B cell (primary cell): ENCODE measurements at regions of chr2 and their contacts with region 1.

Region 1: DNA sequence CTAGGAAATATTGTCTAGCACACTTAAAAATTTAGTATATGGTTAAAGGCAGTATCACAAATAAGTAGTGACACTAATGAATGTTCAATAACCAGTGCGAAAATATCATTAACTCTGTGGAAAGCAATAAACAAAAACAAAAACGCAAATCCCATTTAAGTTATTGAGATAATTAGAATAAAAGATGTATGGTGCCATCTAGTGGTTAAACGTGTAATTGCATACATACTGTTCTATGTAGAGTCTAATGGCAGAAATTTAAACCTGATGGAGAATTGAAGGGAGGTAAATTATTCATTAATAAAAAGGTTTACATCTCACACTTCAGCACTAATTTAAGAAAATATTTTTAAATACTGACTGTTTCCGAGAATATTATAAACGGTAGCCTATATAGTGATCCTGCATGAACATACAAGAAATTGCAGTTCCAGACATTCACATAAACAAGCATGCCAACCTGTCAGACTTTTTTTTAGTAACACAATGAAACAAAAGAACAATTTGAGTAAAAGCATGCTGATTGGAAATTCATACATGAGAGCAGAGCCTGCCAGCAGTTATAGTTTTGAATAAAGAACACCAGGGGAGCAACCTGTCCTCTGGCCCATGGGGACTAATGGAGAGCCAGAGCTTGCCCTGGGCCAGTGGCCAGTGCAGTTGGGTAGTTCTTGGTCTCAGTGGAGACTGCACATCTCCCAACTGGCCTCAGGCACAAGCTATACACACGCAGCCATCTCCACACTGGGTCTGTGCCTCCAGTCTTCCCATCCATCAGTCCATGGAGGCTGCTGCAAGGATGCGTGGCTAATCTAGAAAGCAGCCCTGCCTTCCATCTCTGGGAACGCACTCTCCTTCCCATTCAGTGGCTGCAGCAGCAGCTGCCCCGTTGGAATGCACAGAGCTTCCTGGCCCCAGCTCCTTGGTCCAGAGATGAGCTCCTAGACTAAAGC is 28.0 kb downstream of the GCG start:
- DNase-seq: peak; percentile 70
- ATAC-seq: no peak
- H3K4me3 ChIP-seq: no peak overlapping the region
- H3K4me3 Mint-ChIP-seq: no peak overlapping the region
- H3K27ac ChIP-seq: no peak overlapping the region
- H3K27ac Mint-ChIP-seq: no peak overlapping the region
- H3K4me1 ChIP-seq: peaks cover 13 to 15% of the 10 kb centered on the region in 2 donors
- H3K4me1 Mint-ChIP-seq: peaks cover 21% of the 10 kb centered on the region
- H3K27me3 ChIP-seq: no peaks in the 10 kb centered on the region
- H3K27me3 Mint-ChIP-seq: no peaks in the 10 kb centered on the region
- CTCF ChIP-seq: peak; percentile 95

Region 2: DNA sequence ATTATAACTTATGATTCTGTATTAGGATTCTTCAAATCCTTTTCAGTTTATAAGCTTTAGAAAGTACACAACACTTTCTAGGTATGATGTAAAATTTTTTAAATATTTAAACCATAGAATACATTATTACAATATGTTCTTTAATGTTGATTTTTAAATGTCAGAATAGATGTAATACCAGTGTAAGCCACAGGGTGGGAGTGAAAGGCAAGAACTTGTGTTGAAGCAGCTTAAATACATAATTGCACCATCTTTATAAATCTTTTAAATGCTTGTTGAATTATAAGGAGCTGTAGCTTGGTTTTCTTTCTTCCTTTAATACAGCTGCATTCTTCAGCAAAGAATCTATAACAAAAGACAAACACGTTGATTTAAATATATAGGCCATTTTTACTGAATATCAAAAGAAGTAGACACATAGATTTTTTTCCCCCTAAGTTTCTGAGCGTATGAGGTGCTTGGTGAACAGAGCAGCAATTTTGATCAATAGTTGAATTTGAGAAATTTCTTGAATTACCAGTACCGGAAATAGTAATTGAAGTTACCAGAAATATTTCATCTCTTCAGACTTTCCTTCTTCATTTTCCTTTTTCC is 900.8 kb before region 1 on chr2:
- CTCF ChIA-PET with region 1: no interaction called
- POLR2A ChIA-PET with region 1: no interaction called
- intact Hi-C with region 1: loop called (anchors 5 kb)
- DNase-seq: peak; percentile 62
- ATAC-seq: peak; percentile 66
- H3K4me3 ChIP-seq: no peak overlapping the region
- H3K4me3 Mint-ChIP-seq: no peak overlapping the region
- H3K27ac ChIP-seq: no peak overlapping the region
- H3K27ac Mint-ChIP-seq: no peak overlapping the region
- H3K4me1 ChIP-seq: no peaks in the 10 kb centered on the region
- H3K4me1 Mint-ChIP-seq: no peaks in the 10 kb centered on the region
- H3K27me3 ChIP-seq: no peaks in the 10 kb centered on the region
- H3K27me3 Mint-ChIP-seq: no peaks in the 10 kb centered on the region
- CTCF ChIP-seq: peak; percentile 91

Region 3: DNA sequence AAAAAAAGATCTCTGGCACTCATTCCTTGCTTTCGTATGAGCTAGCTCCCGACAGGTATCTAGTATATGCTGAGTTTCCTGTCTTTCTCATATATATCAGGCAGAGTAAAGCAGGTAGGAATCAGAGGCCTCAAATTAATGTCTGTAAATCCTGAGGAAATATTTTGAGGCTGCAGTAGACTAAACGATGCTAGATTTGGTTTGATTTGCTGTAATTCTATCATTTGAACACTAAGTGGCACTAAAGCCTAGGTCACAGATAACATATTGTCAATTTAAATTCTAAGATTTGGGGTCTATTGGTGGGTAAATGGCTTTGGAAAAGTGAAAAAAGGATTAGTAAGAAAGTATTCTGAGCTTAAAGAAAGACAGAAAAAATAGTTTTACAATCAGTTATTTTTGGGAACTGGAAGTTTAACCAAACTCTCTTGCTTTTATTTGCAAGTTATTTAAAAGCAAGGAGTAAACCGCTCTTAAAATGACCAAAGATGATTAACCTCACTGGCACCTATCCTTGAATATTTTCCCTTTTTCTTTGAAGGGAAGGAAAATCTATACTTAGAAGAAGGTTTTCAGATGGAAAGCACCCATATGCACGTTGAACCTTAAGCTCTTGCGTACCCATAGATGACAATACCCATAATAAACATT is 537.4 kb before region 1 on chr2:
- CTCF ChIA-PET with region 1: no interaction called
- POLR2A ChIA-PET with region 1: no interaction called
- intact Hi-C with region 1: loop called (anchors 5 kb)
- DNase-seq: peak; percentile 8
- ATAC-seq: no peak
- H3K4me3 ChIP-seq: no peak overlapping the region
- H3K4me3 Mint-ChIP-seq: no peak overlapping the region
- H3K27ac ChIP-seq: no peak overlapping the region
- H3K27ac Mint-ChIP-seq: no peak overlapping the region
- H3K4me1 ChIP-seq: no peaks in the 10 kb centered on the region
- H3K4me1 Mint-ChIP-seq: no peaks in the 10 kb centered on the region
- H3K27me3 ChIP-seq: no peaks in the 10 kb centered on the region
- H3K27me3 Mint-ChIP-seq: no peaks in the 10 kb centered on the region
- CTCF ChIP-seq: peak; percentile 59

Region 4: GRCh38 chr2:162007447-162008040 is 116.5 kb before region 1 on chr2:
- CTCF ChIA-PET with region 1: interaction called, 12 read pairs
- POLR2A ChIA-PET with region 1: no interaction called
- intact Hi-C with region 1: no loop called
- DNase-seq: peak; percentile 20
- ATAC-seq: no peak
- H3K4me3 ChIP-seq: no peak overlapping the region
- H3K4me3 Mint-ChIP-seq: no peak overlapping the region
- H3K27ac ChIP-seq: no peak overlapping the region
- H3K27ac Mint-ChIP-seq: no peak overlapping the region
- H3K4me1 ChIP-seq: no peaks in the 10 kb centered on the region
- H3K4me1 Mint-ChIP-seq: no peaks in the 10 kb centered on the region
- H3K27me3 ChIP-seq: no peaks in the 10 kb centered on the region
- H3K27me3 Mint-ChIP-seq: no peaks in the 10 kb centered on the region
- CTCF ChIP-seq: peak; percentile 90

Region 5: DNA sequence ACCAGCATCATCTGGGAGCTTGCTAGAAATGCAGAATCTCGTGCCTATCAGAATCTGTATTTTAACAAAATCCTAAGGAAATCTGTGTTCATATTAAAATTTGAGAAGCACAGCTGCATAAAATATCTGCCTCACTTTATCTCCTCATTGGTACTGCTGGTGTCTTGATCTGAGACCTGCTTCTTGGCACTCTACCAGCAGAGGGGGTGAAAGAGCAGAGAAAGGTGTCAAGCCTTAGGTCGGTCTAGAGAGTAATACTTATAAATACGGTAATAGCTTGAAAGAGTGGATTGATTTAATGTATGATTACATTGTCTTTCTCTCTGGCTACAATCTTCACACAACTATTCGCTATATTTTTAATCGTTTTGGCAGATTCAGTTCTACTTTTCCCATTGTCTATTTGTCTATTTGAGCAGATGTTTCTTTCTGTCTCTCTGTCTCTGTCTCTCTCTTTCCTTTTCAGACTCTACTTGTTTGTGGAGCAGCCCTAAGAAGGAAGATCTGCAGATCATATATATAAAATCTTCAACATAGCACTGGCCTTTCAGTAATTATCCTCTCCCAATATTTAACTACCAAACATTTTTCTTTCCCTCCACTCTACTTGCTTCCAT is 29.6 kb after region 1 on chr2:
- CTCF ChIA-PET with region 1: interaction called, 20 read pairs
- POLR2A ChIA-PET with region 1: no interaction called
- intact Hi-C with region 1: no loop called
- DNase-seq: peak; percentile 56
- ATAC-seq: peak; percentile 60
- H3K4me3 ChIP-seq: no peak overlapping the region
- H3K4me3 Mint-ChIP-seq: no peak overlapping the region
- H3K27ac ChIP-seq: no peak overlapping the region
- H3K27ac Mint-ChIP-seq: no peak overlapping the region
- H3K4me1 ChIP-seq: no peaks in the 10 kb centered on the region
- H3K4me1 Mint-ChIP-seq: peaks cover 2% of the 10 kb centered on the region
- H3K27me3 ChIP-seq: peaks cover 0 to 7% (median 3%) of the 10 kb centered on the region in 4 experiments
- H3K27me3 Mint-ChIP-seq: peaks cover 29% of the 10 kb centered on the region
- CTCF ChIP-seq: peak; percentile 82

Region 6: GRCh38 chr2:162623888-162624287 is 499.8 kb after region 1 on chr2:
- CTCF ChIA-PET with region 1: no interaction called
- POLR2A ChIA-PET with region 1: no interaction called
- intact Hi-C with region 1: no loop called
- DNase-seq: no peak
- ATAC-seq: no peak
- H3K4me3 ChIP-seq: no peak overlapping the region
- H3K4me3 Mint-ChIP-seq: no peak overlapping the region
- H3K27ac ChIP-seq: no peak overlapping the region
- H3K27ac Mint-ChIP-seq: no peak overlapping the region
- H3K4me1 ChIP-seq: no peaks in the 10 kb centered on the region
- H3K4me1 Mint-ChIP-seq: no peaks in the 10 kb centered on the region
- H3K27me3 ChIP-seq: no peaks in the 10 kb centered on the region
- H3K27me3 Mint-ChIP-seq: no peaks in the 10 kb centered on the region
- CTCF ChIP-seq: no peak